ENCODE measurements at regions of chr11 and their contacts with region 1.

Region 1: GRCh38 chr11:63641727-63642126 is 27.5 kb upstream of the PLAAT3 start:
- DNase-seq: no peak
- H3K4me3 ChIP-seq: no peak overlapping the region
- H3K27ac ChIP-seq: no peak overlapping the region
- H3K4me1 ChIP-seq: no peaks in the 10 kb centered on the region
- H3K27me3 ChIP-seq: no peaks in the 10 kb centered on the region
- CTCF ChIP-seq: no peak
- EP300 ChIP-seq: no peak
- POLR2A ChIP-seq: no peak

Region 2: DNA sequence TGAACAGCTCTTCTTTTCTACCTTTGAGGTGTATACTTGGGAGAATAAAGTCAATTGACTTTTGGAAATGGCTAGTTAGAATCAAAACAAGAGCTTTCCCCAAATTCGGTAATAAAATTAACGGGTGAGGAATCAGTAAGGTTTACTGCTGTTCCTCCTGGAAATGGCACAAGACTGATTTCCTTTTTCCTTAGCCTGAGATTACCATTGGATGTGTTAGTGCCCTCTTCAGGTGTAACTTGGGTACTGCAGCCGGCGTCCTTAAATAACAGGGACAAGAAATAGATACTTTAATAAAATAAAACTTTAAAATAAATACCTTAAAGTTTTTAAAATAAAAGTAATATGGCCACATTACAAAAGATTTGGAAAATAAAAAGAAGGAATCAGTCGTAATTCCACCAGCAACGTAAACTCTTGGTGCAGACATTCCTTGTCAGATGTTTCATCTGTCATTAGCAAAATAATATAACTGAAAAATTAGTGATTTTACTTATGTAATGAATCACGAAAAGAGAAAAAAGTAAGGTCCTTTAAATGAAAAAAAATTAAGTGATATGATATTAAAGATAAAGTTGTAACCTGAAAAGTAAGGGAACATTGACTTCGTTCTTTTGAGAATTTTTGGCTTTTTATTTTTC is 97.1 kb after region 1 on chr11:
- intact Hi-C with region 1: loop called in 2 of 4 experiments (anchors 5 to 10 kb)
- DNase-seq: peak; percentile 49 to 82 (median 73)
- H3K4me3 ChIP-seq: no peak overlapping the region
- H3K27ac ChIP-seq: no peak overlapping the region
- H3K4me1 ChIP-seq: no peaks in the 10 kb centered on the region
- H3K27me3 ChIP-seq: no peaks in the 10 kb centered on the region
- CTCF ChIP-seq: peak; percentile 73 to 88 (median 83)
- EP300 ChIP-seq: no peak
- POLR2A ChIP-seq: no peak

Measured in ovary (tissue), 10 donors.